Esophagus squamous epithelium (tissue), 5 donors: ENCODE measurements at regions of chr11 and their contacts with region 1.

Region 1: GRCh38 chr11:44621140-44621681 is 55.7 kb downstream of the CD82 start:
- DNase-seq: no peak
- H3K4me3 ChIP-seq: no peak overlapping the region
- H3K27ac ChIP-seq: no peak overlapping the region
- H3K4me1 ChIP-seq: peaks cover 5 to 42% (median 13%) of the 10 kb centered on the region in 3 donors
- H3K27me3 ChIP-seq: no peaks in the 10 kb centered on the region
- CTCF ChIP-seq: peak; percentile 59 to 94 (median 89)
- POLR2A ChIP-seq: no peak

Region 2: GRCh38 chr11:44556735-44557409 is 64.3 kb before region 1 on chr11:
- intact Hi-C with region 1: loop called (anchors 2 kb)
- DNase-seq: no peak
- H3K4me3 ChIP-seq: no peak overlapping the region
- H3K27ac ChIP-seq: no peak overlapping the region
- H3K4me1 ChIP-seq: peaks cover 0 to 40% (median 25%) of the 10 kb centered on the region in 3 donors
- H3K27me3 ChIP-seq: no peaks in the 10 kb centered on the region
- CTCF ChIP-seq: peak; percentile 43 to 91 (median 88)
- POLR2A ChIP-seq: no peak

Region 3: DNA sequence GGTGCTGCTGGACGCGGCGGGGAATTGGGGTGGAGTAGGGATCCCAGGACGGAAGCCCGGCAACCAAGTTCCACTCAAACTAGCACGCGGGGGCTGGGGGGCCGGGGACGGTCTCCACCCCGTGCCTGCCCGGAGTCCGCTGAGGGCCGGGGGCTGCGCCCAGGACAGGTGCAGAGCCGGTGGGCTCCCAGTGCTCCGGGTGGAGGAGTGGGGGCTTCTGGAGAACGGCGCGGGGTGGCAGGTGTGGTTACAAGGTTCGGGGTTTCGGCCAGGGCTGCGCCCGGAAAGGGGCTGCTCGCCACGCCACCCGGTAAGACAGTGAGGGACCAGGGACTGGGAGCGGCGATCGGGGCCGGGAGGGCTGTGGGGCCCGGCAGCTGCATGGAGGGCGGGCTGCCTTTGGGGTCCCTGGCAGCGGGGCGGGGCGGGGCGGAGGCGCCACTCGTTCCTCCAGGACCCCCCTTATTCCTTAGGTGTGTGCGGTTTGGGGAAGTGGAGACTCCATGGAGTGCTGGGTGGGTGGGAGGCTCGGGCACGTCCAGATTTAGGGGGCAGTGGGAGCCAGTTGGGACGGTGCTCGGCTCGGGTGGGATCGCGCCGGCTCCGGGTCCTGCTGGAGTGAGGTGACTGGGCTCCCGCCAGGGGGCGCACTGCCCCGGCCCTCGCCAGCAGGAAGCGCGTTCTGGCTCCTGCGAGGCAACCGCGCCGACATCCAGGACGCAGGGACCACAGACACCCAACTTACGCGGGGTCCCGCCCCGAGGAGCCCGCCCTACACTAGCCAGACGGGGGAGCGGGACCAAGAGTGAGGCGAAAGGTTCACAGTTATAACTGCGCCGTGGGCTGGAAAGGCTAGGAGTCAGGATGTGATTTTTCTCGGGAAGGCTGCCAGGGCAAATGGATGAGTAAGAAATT is 106.4 kb after region 1 on chr11:
- intact Hi-C with region 1: loop called (anchors 10 kb)
- DNase-seq: no peak
- H3K4me3 ChIP-seq: peak overlapping the region; percentile 35 to 79 (median 56)
- H3K27ac ChIP-seq: peak overlapping the region; percentile 58 to 86 (median 81)
- H3K4me1 ChIP-seq: peaks cover 11 to 71% (median 35%) of the 10 kb centered on the region in 3 donors
- H3K27me3 ChIP-seq: peaks cover 0 to 54% (median 0%) of the 10 kb centered on the region in 4 donors
- CTCF ChIP-seq: peak; percentile 85 to 96 (median 88)
- POLR2A ChIP-seq: no peak

Region 4: GRCh38 chr11:44911029-44911814 is 290.0 kb after region 1 on chr11:
- intact Hi-C with region 1: loop called (anchors 5 kb)
- DNase-seq: peak; percentile 25
- H3K4me3 ChIP-seq: no peak overlapping the region
- H3K27ac ChIP-seq: no peak overlapping the region
- H3K4me1 ChIP-seq: peaks cover 0 to 24% (median 0%) of the 10 kb centered on the region in 3 donors
- H3K27me3 ChIP-seq: peaks cover 0 to 9% (median 0%) of the 10 kb centered on the region in 4 donors
- CTCF ChIP-seq: peak; percentile 72 to 89 (median 84)
- POLR2A ChIP-seq: no peak

Region 5: GRCh38 chr11:45217991-45218390 is 596.8 kb after region 1 on chr11:
- intact Hi-C with region 1: no loop called
- DNase-seq: no peak
- H3K4me3 ChIP-seq: no peak overlapping the region
- H3K27ac ChIP-seq: no peak overlapping the region
- H3K4me1 ChIP-seq: no peaks in the 10 kb centered on the region
- H3K27me3 ChIP-seq: no peaks in the 10 kb centered on the region
- CTCF ChIP-seq: no peak
- POLR2A ChIP-seq: no peak